Tibial artery (tissue), 4 donors: ENCODE measurements at regions of chr13 and their contacts with region 1.

Region 1: DNA sequence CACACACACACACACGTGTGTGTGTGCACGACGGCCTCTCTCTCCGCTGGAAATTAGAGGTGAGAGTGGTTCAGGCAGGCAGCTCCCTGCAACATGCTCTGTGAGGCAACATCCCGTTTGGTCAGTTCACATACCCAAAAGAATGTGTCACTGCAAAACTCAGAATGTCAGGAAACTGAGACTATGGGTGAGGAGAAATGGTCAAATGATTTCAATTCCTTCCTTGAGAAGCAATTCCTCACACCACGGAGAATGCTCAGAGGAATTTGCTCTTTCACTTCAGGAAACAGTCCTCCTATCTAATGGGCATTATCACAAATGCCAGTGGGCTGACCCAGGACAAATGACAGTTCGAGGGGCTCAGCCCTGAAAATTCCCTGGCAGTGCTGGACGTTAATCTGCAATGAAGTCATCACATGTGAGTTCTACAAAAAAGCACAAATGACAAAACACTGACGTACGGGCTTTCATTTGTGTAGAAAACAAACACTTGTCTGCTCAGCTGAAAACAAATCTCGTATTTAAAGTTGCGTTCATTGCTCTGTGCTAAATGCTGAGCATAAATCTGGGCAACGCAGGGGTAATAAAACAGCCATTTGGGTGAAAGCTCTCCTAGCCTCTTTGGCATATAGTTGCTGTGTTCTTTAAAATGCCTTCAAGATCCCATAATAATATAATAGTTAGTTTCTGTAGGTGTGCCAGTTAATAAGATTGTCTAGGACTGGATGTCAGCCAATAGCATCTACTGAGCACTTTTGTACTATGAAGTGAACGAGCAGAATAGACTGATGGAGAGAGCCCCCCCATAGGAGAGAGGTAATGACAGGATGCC is 18.6 kb upstream of the LATS2 start:
- DNase-seq: peak; percentile 42 to 75
- H3K4me3 ChIP-seq: peak overlapping the region; percentile 39 to 40
- H3K27ac ChIP-seq: peak overlapping the region; percentile 73 to 76
- H3K4me1 ChIP-seq: peaks cover 0 to 34% (median 17%) of the 10 kb centered on the region in 4 donors
- H3K27me3 ChIP-seq: no peaks in the 10 kb centered on the region
- CTCF ChIP-seq: no peak

Region 2: GRCh38 chr13:20940083-20940880 is 139.7 kb before region 1 on chr13:
- intact Hi-C with region 1: no loop called
- DNase-seq: no peak
- H3K4me3 ChIP-seq: no peak overlapping the region
- H3K27ac ChIP-seq: no peak overlapping the region
- H3K4me1 ChIP-seq: peaks cover 0 to 5% (median 0%) of the 10 kb centered on the region in 4 donors
- H3K27me3 ChIP-seq: peaks cover 0 to 7% of the 10 kb centered on the region in 2 donors
- CTCF ChIP-seq: no peak

Region 3: GRCh38 chr13:20988021-20988908 is 91.7 kb before region 1 on chr13:
- intact Hi-C with region 1: no loop called
- DNase-seq: no peak
- H3K4me3 ChIP-seq: no peak overlapping the region
- H3K27ac ChIP-seq: no peak overlapping the region
- H3K4me1 ChIP-seq: no peaks in the 10 kb centered on the region
- H3K27me3 ChIP-seq: no peaks in the 10 kb centered on the region
- CTCF ChIP-seq: no peak

Region 4: DNA sequence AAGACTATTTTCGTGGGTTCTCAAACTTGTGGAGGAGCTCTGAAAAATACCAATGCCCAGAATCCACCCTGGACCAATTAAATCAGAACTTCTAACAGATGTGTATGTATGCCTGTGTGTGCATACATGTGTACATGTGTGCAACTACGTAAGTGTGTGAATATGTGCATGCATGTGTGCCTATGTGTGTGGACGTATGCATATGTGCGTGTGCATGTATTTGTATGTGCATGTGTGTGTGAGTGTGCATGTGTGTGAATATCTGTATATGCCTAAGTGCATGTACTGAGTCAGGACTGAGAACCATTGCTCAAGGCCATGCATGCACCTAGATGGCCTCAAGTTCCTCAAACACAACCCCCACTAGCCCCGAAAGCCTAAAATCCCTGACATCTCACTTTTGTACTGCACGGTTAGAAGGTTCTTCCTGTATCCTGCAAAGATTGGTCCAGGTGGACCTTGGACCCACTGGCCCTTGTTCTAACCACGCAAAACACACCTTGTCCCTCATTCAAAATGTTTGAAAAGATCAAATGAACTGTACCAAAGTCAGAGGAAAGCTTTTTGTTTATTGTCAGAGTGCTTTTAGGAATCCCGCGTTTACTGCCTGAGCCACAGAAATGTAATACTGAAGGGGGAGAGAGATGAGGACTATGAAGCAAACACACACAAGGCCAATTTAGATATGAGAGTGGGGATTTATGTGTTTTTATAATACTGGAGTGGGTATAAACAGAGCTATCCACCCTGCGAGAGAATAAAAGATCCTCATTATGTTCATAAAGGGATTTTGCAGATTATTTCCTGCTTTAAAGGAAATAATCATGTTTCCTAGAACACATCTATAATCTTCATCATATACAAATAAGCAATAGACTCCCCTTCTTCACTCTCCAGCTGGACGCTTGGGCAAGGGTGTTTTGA is 57.7 kb before region 1 on chr13:
- intact Hi-C with region 1: no loop called
- DNase-seq: peak; percentile 8 to 34
- H3K4me3 ChIP-seq: no peak overlapping the region
- H3K27ac ChIP-seq: no peak overlapping the region
- H3K4me1 ChIP-seq: peaks cover 0 to 52% (median 25%) of the 10 kb centered on the region in 4 donors
- H3K27me3 ChIP-seq: no peaks in the 10 kb centered on the region
- CTCF ChIP-seq: no peak

Region 5: DNA sequence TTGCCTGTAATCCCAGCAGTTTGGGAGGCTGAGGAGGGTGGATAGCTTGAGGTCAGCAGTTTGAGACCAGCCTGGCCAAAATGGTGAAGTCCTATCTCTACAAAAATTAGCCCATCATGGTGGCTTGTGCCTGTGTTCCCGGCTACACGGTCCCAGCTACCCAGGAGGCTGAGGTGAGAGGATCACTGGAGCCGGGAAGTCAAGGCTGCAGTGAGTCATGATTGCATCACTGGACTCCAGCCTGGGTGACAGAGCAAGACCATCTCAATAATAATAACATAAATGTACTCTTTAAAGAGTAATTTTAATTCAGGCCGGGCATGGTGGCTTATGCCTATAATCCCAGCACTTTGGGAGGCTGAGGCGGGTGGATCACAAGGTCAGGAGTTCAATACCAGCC is 57.7 kb after region 1 on chr13:
- intact Hi-C with region 1: loop called (anchors 10 kb)
- DNase-seq: no peak
- H3K4me3 ChIP-seq: no peak overlapping the region
- H3K27ac ChIP-seq: no peak overlapping the region
- H3K4me1 ChIP-seq: peaks cover 0 to 17% (median 16%) of the 10 kb centered on the region in 4 donors
- H3K27me3 ChIP-seq: no peaks in the 10 kb centered on the region
- CTCF ChIP-seq: no peak